Esophagus muscularis mucosa (tissue), 4 donors: ENCODE measurements at regions of chr14 and their contacts with region 1.

Region 1: GRCh38 chr14:36647824-36648753 is 13.6 kb upstream of the PAX9 start:
- DNase-seq: peak; percentile 88
- H3K4me3 ChIP-seq: peak overlapping the region; percentile 39 to 57 (median 44)
- H3K27ac ChIP-seq: no peak overlapping the region
- H3K4me1 ChIP-seq: peaks cover 17 to 21% (median 19%) of the 10 kb centered on the region in 4 donors
- H3K27me3 ChIP-seq: peaks cover 7 to 95% (median 48%) of the 10 kb centered on the region in 4 donors
- CTCF ChIP-seq: peak; percentile 34 to 51 (median 44)
- EP300 ChIP-seq: no peak
- POLR2A ChIP-seq: no peak

Region 2: DNA sequence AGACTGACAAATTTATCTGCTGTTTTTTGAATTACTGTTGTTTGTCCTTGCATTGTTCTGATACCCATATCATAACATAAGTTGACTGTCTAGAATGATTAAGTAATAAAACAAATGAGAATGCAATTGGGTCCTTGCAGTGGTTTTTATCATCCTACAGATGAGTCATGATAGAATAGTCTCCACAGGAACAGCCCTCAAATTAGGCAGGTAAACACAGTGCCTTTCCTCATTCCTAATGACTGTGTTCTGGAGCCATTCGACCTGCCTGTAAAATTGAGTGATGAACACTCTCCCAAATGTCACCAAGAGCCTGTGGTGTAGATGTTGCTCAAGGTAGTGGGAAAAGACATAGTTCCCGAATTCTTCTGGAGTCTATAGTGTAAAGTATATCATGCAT is 78.0 kb before region 1 on chr14:
- intact Hi-C with region 1: no loop called
- DNase-seq: no peak
- H3K4me3 ChIP-seq: no peak overlapping the region
- H3K27ac ChIP-seq: no peak overlapping the region
- H3K4me1 ChIP-seq: no peaks in the 10 kb centered on the region
- H3K27me3 ChIP-seq: peaks cover 0 to 23% (median 3%) of the 10 kb centered on the region in 4 donors
- CTCF ChIP-seq: no peak
- EP300 ChIP-seq: no peak
- POLR2A ChIP-seq: no peak

Region 3: DNA sequence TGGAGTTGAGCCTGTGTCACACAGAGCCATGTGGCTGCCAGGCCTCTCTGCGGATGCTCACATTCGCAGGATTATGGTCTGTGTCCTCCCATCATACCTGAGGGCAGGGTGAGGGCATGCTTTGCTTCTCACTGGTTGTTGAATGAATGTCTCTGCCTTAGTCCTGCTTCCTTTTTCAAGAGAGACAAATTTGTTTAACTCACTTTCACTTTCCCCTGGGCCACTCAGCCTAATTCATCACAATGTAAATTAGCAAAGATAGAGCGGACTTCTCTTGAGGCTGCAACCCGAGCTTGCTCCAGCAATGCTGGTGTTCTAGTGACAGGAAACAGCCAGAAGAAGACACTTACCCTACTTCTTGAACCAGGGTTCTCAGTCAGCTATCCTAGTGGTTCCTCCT is 21.9 kb before region 1 on chr14:
- intact Hi-C with region 1: no loop called
- DNase-seq: no peak
- H3K4me3 ChIP-seq: no peak overlapping the region
- H3K27ac ChIP-seq: no peak overlapping the region
- H3K4me1 ChIP-seq: no peaks in the 10 kb centered on the region
- H3K27me3 ChIP-seq: peaks cover 0 to 30% (median 0%) of the 10 kb centered on the region in 4 donors
- CTCF ChIP-seq: no peak
- EP300 ChIP-seq: no peak
- POLR2A ChIP-seq: no peak

Region 4: GRCh38 chr14:37150414-37150813 is 502.3 kb after region 1 on chr14:
- intact Hi-C with region 1: loop called (anchors 5 kb)
- DNase-seq: no peak
- H3K4me3 ChIP-seq: no peak overlapping the region
- H3K27ac ChIP-seq: no peak overlapping the region
- H3K4me1 ChIP-seq: peaks cover 0 to 6% (median 0%) of the 10 kb centered on the region in 4 donors
- H3K27me3 ChIP-seq: no peaks in the 10 kb centered on the region
- CTCF ChIP-seq: peak; percentile 59 to 69 (median 68)
- EP300 ChIP-seq: no peak
- POLR2A ChIP-seq: no peak